ENCODE measurements at regions of chr2 and their contacts with region 1.

Region 1: GRCh38 chr2:50143822-50144575 is 887.9 kb downstream of the NRXN1 start:
- DNase-seq: peak; percentile 35
- ATAC-seq: peak; percentile 86
- H3K4me3 ChIP-seq: peak overlapping the region; percentile 33 to 63
- H3K27ac ChIP-seq: peak overlapping the region; percentile 36; the same call in 1 of the 2 replicates
- H3K4me1 ChIP-seq: no peaks in the 10 kb centered on the region
- H3K27me3 ChIP-seq: no peaks in the 10 kb centered on the region
- CTCF ChIP-seq: peak; percentile 72

Region 2: GRCh38 chr2:48600204-48600813 is 1543.7 kb before region 1 on chr2:
- CTCF ChIA-PET with region 1: no interaction called
- POLR2A ChIA-PET with region 1: no interaction called
- in situ Hi-C with region 1: no loop called
- intact Hi-C with region 1: loop called (anchors 10 kb)
- DNase-seq: peak; percentile 53
- ATAC-seq: no peak
- H3K4me3 ChIP-seq: no peak overlapping the region
- H3K27ac ChIP-seq: no peak overlapping the region
- H3K4me1 ChIP-seq: no peaks in the 10 kb centered on the region
- H3K27me3 ChIP-seq: peaks cover 17% of the 10 kb centered on the region
- CTCF ChIP-seq: peak; percentile 82

Region 3: GRCh38 chr2:48946449-48947048 is 1197.5 kb before region 1 on chr2:
- CTCF ChIA-PET with region 1: no interaction called
- POLR2A ChIA-PET with region 1: no interaction called
- in situ Hi-C with region 1: no loop called
- intact Hi-C with region 1: loop called (anchors 10 kb)
- DNase-seq: peak; percentile 28
- ATAC-seq: peak; percentile 91
- H3K4me3 ChIP-seq: no peak overlapping the region
- H3K27ac ChIP-seq: no peak overlapping the region
- H3K4me1 ChIP-seq: no peaks in the 10 kb centered on the region
- H3K27me3 ChIP-seq: peaks cover 3% of the 10 kb centered on the region; the same call in 1 of the 2 replicates
- CTCF ChIP-seq: peak; percentile 86

Region 4: DNA sequence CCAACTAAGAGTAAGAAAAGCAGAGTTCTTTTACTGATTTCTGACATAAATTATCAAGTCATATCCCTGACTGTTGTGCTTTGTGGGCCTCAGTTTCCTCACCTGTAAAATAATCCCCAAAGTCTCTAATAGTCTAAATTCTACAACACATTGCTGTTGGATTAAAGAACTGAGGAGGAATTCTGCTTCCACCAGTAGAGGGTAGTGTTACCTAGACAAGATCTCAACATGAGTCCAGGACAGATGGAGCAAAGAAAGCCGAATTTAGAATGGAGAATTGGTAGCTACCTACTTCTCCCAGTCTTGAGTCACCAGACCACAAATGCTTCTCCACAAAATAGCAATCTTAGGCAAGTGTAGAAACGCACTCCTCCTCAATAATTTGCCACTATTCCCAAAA is 527.2 kb before region 1 on chr2:
- CTCF ChIA-PET with region 1: no interaction called
- POLR2A ChIA-PET with region 1: no interaction called
- in situ Hi-C with region 1: no loop called
- intact Hi-C with region 1: loop called (anchors 5 kb)
- DNase-seq: peak; percentile 20
- ATAC-seq: peak; percentile 78
- H3K4me3 ChIP-seq: no peak overlapping the region
- H3K27ac ChIP-seq: no peak overlapping the region
- H3K4me1 ChIP-seq: no peaks in the 10 kb centered on the region
- H3K27me3 ChIP-seq: no peaks in the 10 kb centered on the region
- CTCF ChIP-seq: peak; percentile 59; the same call in 1 of the 2 replicates

Region 5: GRCh38 chr2:49687918-49688317 is 456.1 kb before region 1 on chr2:
- CTCF ChIA-PET with region 1: interaction called, 12 read pairs
- POLR2A ChIA-PET with region 1: no interaction called
- in situ Hi-C with region 1: no loop called
- intact Hi-C with region 1: loop called (anchors 5 kb)
- DNase-seq: no peak
- ATAC-seq: peak; percentile 70; the same call in 1 of the 2 replicates
- H3K4me3 ChIP-seq: no peak overlapping the region
- H3K27ac ChIP-seq: no peak overlapping the region
- H3K4me1 ChIP-seq: no peaks in the 10 kb centered on the region
- H3K27me3 ChIP-seq: no peaks in the 10 kb centered on the region
- CTCF ChIP-seq: peak; percentile 42; the same call in 1 of the 2 replicates

Region 6: GRCh38 chr2:50004667-50005066 is 139.3 kb before region 1 on chr2:
- CTCF ChIA-PET with region 1: no interaction called
- POLR2A ChIA-PET with region 1: no interaction called
- in situ Hi-C with region 1: no loop called
- intact Hi-C with region 1: no loop called
- DNase-seq: no peak
- ATAC-seq: no peak
- H3K4me3 ChIP-seq: no peak overlapping the region
- H3K27ac ChIP-seq: no peak overlapping the region
- H3K4me1 ChIP-seq: no peaks in the 10 kb centered on the region
- H3K27me3 ChIP-seq: no peaks in the 10 kb centered on the region; the same call in 1 of the 2 replicates
- CTCF ChIP-seq: no peak

Region 7: GRCh38 chr2:50133766-50134165 is 10.2 kb before region 1 on chr2:
- CTCF ChIA-PET with region 1: no interaction called
- POLR2A ChIA-PET with region 1: no interaction called
- in situ Hi-C with region 1: no loop called
- intact Hi-C with region 1: no loop called
- DNase-seq: no peak
- ATAC-seq: no peak
- H3K4me3 ChIP-seq: no peak overlapping the region
- H3K27ac ChIP-seq: no peak overlapping the region
- H3K4me1 ChIP-seq: no peaks in the 10 kb centered on the region
- H3K27me3 ChIP-seq: no peaks in the 10 kb centered on the region
- CTCF ChIP-seq: no peak

Region 8: DNA sequence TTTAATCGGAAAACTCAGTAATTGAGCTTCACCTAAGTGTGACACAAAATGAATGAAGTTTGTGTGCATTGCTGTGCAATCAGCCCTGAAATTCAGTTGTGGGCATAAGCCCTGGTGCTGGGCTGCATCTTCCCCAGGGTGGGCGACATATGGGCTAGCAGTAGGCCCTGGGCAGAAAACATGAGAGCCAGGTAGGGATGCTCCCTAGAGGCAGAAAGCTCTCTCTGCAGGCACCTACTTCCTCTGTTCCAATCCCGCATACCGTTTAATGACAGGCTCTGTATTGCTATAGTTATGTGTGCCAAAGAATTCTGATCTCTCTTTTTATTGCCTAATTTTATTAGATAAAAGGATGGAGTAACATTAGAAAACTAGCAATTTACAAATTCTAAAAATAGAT is 431.2 kb after region 1 on chr2:
- CTCF ChIA-PET with region 1: no interaction called
- POLR2A ChIA-PET with region 1: no interaction called
- in situ Hi-C with region 1: no loop called
- intact Hi-C with region 1: no loop called
- DNase-seq: no peak
- ATAC-seq: no peak
- H3K4me3 ChIP-seq: no peak overlapping the region
- H3K27ac ChIP-seq: no peak overlapping the region
- H3K4me1 ChIP-seq: no peaks in the 10 kb centered on the region
- H3K27me3 ChIP-seq: no peaks in the 10 kb centered on the region
- CTCF ChIP-seq: no peak